ENCODE measurements at regions of chr18 and their contacts with region 1.

Region 1: GRCh38 chr18:2805970-2806943 is 40.5 kb upstream of the EMILIN2 start:
- DNase-seq: no peak
- H3K4me3 ChIP-seq: no peak overlapping the region
- H3K27ac ChIP-seq: no peak overlapping the region
- H3K4me1 ChIP-seq: no peaks in the 10 kb centered on the region
- H3K27me3 ChIP-seq: no peaks in the 10 kb centered on the region
- CTCF ChIP-seq: no peak

Region 2: GRCh38 chr18:2325308-2325849 is 480.9 kb before region 1 on chr18:
- CTCF ChIA-PET with region 1: no interaction called
- dilution Hi-C with region 1: no loop called
- in situ Hi-C with region 1: no loop called
- intact Hi-C with region 1: no loop called
- DNase-seq: peak; percentile 88
- H3K4me3 ChIP-seq: no peak overlapping the region
- H3K27ac ChIP-seq: peak overlapping the region; percentile 21
- H3K4me1 ChIP-seq: peaks cover 9% of the 10 kb centered on the region
- H3K27me3 ChIP-seq: no peaks in the 10 kb centered on the region
- CTCF ChIP-seq: no peak

Region 3: DNA sequence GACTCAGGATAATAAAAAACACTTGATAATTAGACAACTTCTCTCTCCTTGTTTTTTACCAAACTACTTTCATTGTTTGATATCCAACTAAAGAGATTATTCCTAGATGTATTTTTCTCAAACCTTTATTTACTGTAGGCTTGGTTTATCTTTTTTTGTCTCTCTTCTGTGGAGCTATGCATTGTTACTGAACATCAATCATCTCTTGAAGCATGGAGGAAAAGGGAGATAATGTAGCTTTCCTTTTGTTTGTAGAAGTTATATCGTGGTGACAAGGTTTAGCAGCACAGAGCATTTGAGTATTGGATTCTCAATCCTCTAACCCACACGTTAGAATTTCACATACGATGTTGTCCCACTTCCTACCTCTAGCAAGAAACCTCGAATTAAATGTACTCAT is 109.1 kb before region 1 on chr18:
- CTCF ChIA-PET with region 1: no interaction called
- dilution Hi-C with region 1: no loop called
- in situ Hi-C with region 1: no loop called
- intact Hi-C with region 1: no loop called
- DNase-seq: no peak
- H3K4me3 ChIP-seq: no peak overlapping the region
- H3K27ac ChIP-seq: no peak overlapping the region
- H3K4me1 ChIP-seq: no peaks in the 10 kb centered on the region
- H3K27me3 ChIP-seq: no peaks in the 10 kb centered on the region
- CTCF ChIP-seq: no peak

Region 4: DNA sequence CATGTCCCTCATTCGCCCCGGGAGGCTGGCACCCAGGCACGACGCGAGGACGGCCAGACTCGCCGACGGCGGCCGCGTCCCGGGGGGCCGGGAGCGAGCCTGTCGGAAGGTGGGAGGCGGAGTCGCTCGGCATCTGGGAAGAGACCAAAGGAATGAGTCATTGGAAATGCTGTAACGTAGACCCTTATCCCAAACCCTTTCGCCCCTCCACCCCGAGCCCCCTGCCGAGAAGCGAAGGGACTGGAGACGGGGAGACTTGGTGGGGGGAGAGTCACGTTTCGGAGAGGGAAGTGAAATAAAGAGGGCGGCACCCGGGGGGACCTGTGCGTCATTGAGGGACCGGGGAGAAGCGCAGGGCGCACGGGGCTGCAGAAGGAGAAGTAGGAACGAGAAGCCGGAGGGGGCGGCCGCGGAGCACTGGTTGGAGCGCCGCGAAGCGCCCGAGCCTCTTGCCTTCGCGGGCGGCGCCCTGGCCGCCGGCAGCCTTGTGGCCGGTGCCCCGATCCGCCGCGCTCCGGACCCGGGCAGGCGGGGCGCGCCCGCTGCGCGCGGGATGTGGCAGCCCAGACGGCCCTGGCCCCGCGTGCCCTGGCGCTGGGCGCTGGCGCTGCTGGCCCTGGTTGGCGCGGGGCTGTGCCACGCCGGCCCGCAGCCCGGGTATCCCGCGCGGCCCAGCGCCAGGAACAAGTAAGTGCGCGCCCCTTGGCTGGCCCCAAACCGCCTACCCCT is 40.5 kb after region 1 on chr18 and contains the start of gene EMILIN2:
- CTCF ChIA-PET with region 1: no interaction called
- dilution Hi-C with region 1: loop called (anchors 5 kb)
- in situ Hi-C with region 1: no loop called
- intact Hi-C with region 1: no loop called
- DNase-seq: no peak
- H3K4me3 ChIP-seq: peak within 1 kb of the TSS; percentile 3 to 28 (median 27)
- H3K27ac ChIP-seq: no peak within 1 kb of the TSS
- H3K4me1 ChIP-seq: peaks cover 14% of the 10 kb centered on the region
- H3K27me3 ChIP-seq: peaks cover 31% of the 10 kb centered on the region
- CTCF ChIP-seq: no peak
- total RNA-seq, gene EMILIN2: 0.52 to 1.3 TPM

Region 5: GRCh38 chr18:2985628-2986027 is 179.4 kb after region 1 on chr18:
- CTCF ChIA-PET with region 1: no interaction called
- dilution Hi-C with region 1: no loop called
- in situ Hi-C with region 1: no loop called
- intact Hi-C with region 1: no loop called
- DNase-seq: peak; percentile 13
- H3K4me3 ChIP-seq: no peak overlapping the region
- H3K27ac ChIP-seq: no peak overlapping the region
- H3K4me1 ChIP-seq: peaks cover 8% of the 10 kb centered on the region
- H3K27me3 ChIP-seq: no peaks in the 10 kb centered on the region
- CTCF ChIP-seq: peak; percentile 47 to 48

Region 6: GRCh38 chr18:3037423-3037915 is 231.2 kb after region 1 on chr18:
- CTCF ChIA-PET with region 1: no interaction called
- dilution Hi-C with region 1: no loop called
- in situ Hi-C with region 1: no loop called
- intact Hi-C with region 1: no loop called
- DNase-seq: peak; percentile 72
- H3K4me3 ChIP-seq: no peak overlapping the region
- H3K27ac ChIP-seq: no peak overlapping the region
- H3K4me1 ChIP-seq: peaks cover 12% of the 10 kb centered on the region
- H3K27me3 ChIP-seq: no peaks in the 10 kb centered on the region
- CTCF ChIP-seq: no peak

Measured in mammary epithelial cell (primary cell).